HAP-1 (cell line): ENCODE measurements at regions of chr15 and their contacts with region 1.

Region 1: DNA sequence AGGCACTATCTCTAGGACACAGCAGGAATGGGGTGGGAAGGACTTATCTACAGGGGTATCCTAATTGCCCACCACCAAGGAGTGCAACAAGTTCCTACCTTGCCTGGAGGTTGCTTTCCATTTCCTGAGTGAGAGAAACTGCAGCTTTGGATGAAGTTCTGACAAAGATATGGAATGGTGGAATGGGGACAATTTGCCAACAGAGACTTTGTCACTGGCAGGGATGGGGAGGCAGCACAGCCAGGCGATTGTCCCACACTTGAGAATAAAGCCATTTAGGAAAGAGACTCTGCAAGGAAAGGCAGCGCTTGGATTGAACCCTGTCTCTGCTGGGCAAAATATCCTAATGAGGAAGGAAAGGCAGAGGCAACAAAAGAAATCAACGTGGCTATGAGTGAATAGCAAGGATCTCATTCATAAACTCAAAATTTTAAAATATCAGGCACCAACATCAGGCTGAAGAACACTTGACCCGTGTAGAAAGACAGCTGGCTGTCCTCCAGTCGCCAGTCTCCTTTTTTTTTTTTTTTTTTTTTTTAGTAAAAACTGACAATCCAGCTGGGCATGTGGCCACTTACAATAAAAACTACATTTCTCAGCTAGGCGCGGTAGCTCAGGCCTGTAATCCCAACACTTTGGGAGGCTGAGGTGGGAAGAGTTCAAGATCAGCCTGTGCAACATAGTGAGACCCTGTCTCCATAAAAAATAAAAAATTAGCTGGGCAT is 31.6 kb upstream of the PDE8A start:
- DNase-seq: no peak
- H3K4me3 ChIP-seq: no peak overlapping the region
- H3K4me1 ChIP-seq: peaks cover 4% of the 10 kb centered on the region; the same call in 1 of the 2 replicates
- H3K27me3 ChIP-seq: no peaks in the 10 kb centered on the region

Region 2: DNA sequence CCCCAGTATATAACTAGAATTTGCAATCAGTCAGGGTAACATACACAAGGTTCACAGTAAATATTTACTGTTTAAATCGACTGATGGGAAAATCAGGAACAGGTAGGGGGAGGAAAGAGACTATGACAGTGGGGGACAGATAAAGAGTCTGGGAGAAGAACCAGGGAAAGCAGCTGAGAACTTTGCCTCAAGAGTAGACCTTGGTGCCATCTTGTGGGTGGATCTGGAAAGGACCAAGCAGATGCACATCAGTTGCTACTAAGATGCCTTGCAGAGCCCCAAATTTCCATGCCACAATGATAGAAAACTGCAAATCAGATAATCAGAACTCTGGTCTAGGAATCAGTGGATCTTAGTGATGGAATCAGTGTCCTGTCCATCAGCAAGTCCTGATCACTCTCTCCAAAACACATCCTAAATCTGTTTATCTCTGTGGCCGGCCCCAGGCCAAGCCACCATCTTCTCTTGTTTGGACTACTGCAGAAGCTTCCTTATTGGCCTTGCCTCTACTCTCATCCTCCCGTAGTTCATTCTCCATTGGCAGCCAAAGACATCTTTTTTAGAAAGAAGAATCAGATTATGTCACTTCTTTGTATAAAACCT is 94.3 kb after region 1 on chr15:
- in situ Hi-C with region 1: loop called (anchors 5 kb)
- DNase-seq: peak; percentile 61 to 72
- H3K4me3 ChIP-seq: no peak overlapping the region
- H3K4me1 ChIP-seq: peaks cover 13% of the 10 kb centered on the region
- H3K27me3 ChIP-seq: no peaks in the 10 kb centered on the region